K562 (cell line): ENCODE measurements at regions of chr3 and their contacts with region 1.

Region 1: GRCh38 chr3:44439499-44440295 is 37.8 kb downstream of the ZNF445 start:
- DNase-seq: peak; percentile 93 to 98 (median 94)
- ATAC-seq: peak; percentile 91
- H3K4me3 ChIP-seq: peak overlapping the region; percentile 46
- H3K27ac ChIP-seq: peak overlapping the region; percentile 96
- H3K4me1 ChIP-seq: peaks cover 24 to 55% of the 10 kb centered on the region in 2 experiments
- H3K27me3 ChIP-seq: no peaks in the 10 kb centered on the region
- CTCF ChIP-seq: no peak; a peak in 1 of 6 replicates
- EP300 ChIP-seq: peak; percentile 100
- POLR2A ChIP-seq: peak; percentile 98
- RAD21 ChIP-seq: peak in 1 of 2 experiments; percentile 46; a peak in 3 of 4 replicates

Region 2: DNA sequence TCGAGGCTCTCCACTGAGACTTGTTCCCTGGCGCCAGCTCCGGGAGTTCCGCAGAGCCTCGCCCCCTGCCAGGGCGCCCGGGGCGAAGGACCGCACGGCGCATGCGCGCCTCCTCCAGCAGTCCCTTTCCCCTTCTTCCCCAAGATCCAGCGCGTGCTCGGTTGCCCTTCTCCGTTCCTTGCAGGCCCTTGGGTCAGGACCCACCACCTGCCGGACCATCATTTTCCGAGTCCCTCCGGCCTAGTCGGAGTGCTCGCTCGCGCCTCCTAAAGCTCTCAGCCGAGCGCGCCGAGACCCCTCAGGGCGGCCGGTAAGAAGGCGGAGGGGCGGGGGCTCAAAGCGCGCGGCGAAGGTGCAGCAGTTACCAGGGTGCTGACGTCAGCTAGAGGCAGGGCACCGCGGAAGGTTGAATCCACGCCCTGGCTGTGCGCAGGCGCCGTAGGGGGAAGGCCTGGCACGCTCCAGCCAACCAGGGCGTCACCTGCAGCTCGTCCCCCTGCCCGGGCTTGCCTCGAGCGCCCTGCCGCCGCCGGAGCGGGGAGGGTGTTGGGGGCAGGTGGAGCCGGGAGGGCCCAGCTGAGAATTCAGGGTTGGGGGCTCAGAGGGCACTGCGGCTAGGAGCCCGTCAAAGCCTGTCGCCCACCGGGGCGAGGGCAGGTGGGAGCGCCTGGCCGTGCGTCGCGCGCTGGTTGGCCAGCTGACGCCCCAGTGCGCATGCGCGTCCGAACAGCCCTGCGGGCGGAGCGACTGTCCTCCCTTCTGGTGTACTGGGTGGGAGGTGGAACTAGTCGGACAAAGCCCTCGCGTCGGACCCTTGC is 101.5 kb before region 1 on chr3 and contains the start of gene TCAIM:
- CTCF ChIA-PET with region 1: no interaction called
- POLR2A ChIA-PET with region 1: interaction called, 16 read pairs
- in situ Hi-C with region 1: no loop called
- intact Hi-C with region 1: loop called (anchors 2 kb)
- DNase-seq: peak; percentile 99
- ATAC-seq: peak; percentile 97
- H3K4me3 ChIP-seq: peak within 1 kb of the TSS; percentile 65
- H3K27ac ChIP-seq: peak within 1 kb of the TSS; percentile 93
- H3K4me1 ChIP-seq: peaks cover 10 to 12% of the 10 kb centered on the region in 2 experiments; a peak in 3 of 5 replicates
- H3K27me3 ChIP-seq: no peaks in the 10 kb centered on the region
- CTCF ChIP-seq: 0 out of 6 replicates have a peak, but pooled peaks of 1 of the 3 experiments have one; percentile 5
- EP300 ChIP-seq: no peak
- POLR2A ChIP-seq: peak; percentile 97
- RAD21 ChIP-seq: no peak
- polyA plus RNA-seq, gene TCAIM: 41.5 to 44.9 TPM

Region 3: DNA sequence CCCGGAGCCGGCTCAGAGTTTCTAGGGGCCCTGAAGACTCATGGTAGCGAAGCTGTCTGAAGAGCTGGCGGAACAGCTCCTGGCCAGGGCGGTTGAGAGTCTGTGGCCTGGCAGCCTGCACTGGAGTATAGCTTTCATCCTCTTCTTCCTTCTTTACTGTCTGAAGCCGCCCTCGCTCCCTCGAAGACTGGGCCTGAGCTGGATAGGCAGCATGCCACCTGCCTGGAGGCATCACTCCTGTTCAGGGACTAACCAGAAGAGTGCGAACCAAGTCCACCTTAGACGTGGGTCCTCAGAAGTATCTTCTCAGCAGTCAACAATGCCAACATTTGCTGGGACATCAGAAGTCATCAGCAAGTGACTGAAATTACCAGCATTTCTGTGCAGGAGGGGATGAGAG is 15.6 kb after region 1 on chr3:
- CTCF ChIA-PET with region 1: no interaction called
- POLR2A ChIA-PET with region 1: interaction called, 12 read pairs
- in situ Hi-C with region 1: no loop called
- intact Hi-C with region 1: no loop called
- DNase-seq: no peak
- ATAC-seq: no peak
- H3K4me3 ChIP-seq: no peak overlapping the region
- H3K27ac ChIP-seq: no peak overlapping the region
- H3K4me1 ChIP-seq: peaks cover 0 to 5% of the 10 kb centered on the region in 2 experiments; a peak in 1 of 5 replicates
- H3K27me3 ChIP-seq: no peaks in the 10 kb centered on the region
- CTCF ChIP-seq: no peak
- EP300 ChIP-seq: no peak
- POLR2A ChIP-seq: no peak
- RAD21 ChIP-seq: no peak

Region 4: GRCh38 chr3:44477312-44478030 is 37.8 kb after region 1 on chr3 and contains the start of gene ZNF445:
- CTCF ChIA-PET with region 1: no interaction called
- POLR2A ChIA-PET with region 1: interaction called, 10 read pairs
- in situ Hi-C with region 1: no loop called
- intact Hi-C with region 1: loop called (anchors 2 kb)
- DNase-seq: peak; percentile 91 to 96 (median 95)
- ATAC-seq: peak; percentile 94
- H3K4me3 ChIP-seq: peak within 1 kb of the TSS; percentile 82
- H3K27ac ChIP-seq: peak within 1 kb of the TSS; percentile 72
- H3K4me1 ChIP-seq: peaks cover 12 to 24% of the 10 kb centered on the region in 2 experiments; a peak in 4 of 5 replicates
- H3K27me3 ChIP-seq: no peaks in the 10 kb centered on the region
- CTCF ChIP-seq: no peak
- EP300 ChIP-seq: peak; percentile 11; the same call in 1 of the 2 replicates
- POLR2A ChIP-seq: peak; percentile 76
- RAD21 ChIP-seq: no peak
- polyA plus RNA-seq, gene ZNF445: 1.2 to 1.8 TPM

Region 5: DNA sequence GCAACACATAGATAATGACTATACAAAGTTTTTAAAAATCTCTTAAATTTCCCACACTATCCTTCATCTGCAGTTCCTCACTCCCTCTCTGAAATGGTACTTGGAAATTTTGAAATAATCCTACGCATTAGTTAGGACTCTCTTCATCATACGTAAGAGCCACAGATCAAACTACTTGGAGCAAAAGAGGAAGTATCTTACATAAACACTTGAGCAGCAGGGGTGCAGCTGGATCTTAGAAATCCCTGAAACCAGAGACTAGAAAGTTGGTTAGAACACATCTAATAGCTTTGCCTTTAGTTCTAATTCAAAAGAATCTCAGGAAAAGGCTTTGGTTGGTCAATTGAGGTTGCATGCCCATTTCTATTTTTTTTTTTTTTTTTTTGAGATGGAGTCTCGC is 76.5 kb after region 1 on chr3:
- CTCF ChIA-PET with region 1: no interaction called
- POLR2A ChIA-PET with region 1: interaction called, 9 read pairs
- in situ Hi-C with region 1: no loop called
- intact Hi-C with region 1: loop called (anchors 2 kb)
- DNase-seq: no peak
- ATAC-seq: no peak
- H3K4me3 ChIP-seq: no peak overlapping the region
- H3K27ac ChIP-seq: no peak overlapping the region
- H3K4me1 ChIP-seq: peaks cover 12 to 22% of the 10 kb centered on the region in 2 experiments
- H3K27me3 ChIP-seq: no peaks in the 10 kb centered on the region
- CTCF ChIP-seq: no peak
- EP300 ChIP-seq: no peak
- POLR2A ChIP-seq: no peak
- RAD21 ChIP-seq: no peak